Lower lobe of right lung (tissue), 2 donors: ENCODE measurements at regions of chr4 and their contacts with region 1.

Region 1: DNA sequence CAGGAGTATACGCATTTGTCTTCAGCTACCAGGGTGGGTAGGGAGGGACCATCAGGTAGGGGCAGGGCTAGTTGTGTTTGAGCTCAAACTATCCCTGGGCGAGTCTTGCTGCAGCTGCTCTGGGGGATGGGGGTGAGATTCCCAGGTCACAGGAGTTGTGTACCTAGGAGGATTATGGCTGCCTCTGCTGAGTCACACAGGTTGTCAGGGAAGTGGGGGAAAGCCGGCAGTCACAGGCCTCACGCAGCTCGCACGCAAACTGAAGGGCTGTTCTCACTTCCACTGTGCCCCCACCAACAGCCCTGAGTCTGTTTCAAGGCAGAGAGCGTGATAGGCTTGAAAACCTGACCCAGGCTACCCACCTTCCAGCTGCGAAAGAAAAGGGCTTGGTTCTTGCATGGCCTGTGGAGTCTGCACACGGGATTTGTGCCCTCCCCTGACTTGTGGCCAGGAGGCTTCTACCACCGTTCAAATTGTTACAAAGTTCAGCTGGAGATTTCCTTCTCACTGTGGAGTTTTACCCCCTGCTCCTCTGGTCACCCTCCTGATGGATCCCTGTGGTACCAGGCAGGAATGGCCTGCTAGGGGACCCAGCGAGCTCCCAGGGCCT is 63.8 kb downstream of the ARFIP1 start:
- DNase-seq: no peak
- ATAC-seq: no peak
- H3K4me3 ChIP-seq: no peak overlapping the region
- H3K27ac ChIP-seq: no peak overlapping the region
- H3K4me1 ChIP-seq: no peaks in the 10 kb centered on the region
- H3K27me3 ChIP-seq: no peaks in the 10 kb centered on the region
- CTCF ChIP-seq: no peak

Region 2: DNA sequence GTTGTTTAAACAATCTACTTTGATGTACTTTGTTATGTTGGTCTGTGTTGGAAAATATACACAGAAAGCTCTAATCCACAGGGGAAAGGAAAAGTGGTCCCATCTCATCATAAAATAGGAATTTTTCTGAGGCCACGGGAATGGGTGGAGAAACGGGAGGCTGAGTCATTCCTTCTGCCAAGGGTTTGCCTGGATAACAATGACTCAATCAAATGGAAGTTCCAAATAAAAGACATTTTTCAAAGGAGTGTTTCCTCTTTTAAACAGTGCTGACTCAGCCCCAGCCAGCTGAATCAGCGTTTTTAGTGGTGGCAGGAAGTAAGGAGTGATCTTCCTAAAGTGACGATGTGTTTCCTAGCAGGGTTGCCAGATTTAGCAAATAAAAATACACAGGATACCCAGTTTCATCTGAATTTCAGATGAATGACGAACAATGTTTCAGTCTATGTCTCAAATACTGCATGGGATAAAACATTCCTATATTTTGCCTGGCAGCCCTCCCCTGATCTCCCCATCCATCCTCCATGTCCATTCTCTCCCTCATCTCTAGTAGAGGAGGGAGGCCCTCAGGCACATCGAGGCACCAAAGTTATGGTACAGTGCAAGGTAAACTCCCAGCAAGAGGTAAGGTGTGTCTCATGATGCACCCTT is 737.3 kb before region 1 on chr4:
- intact Hi-C with region 1: no loop called
- DNase-seq: peak; percentile 57
- ATAC-seq: peak; percentile 64 to 68
- H3K4me3 ChIP-seq: no peak overlapping the region
- H3K27ac ChIP-seq: no peak overlapping the region
- H3K4me1 ChIP-seq: peaks cover 2% of the 10 kb centered on the region
- H3K27me3 ChIP-seq: no peaks in the 10 kb centered on the region
- CTCF ChIP-seq: no peak

Region 3: GRCh38 chr4:152927737-152928136 is 84.2 kb after region 1 on chr4:
- intact Hi-C with region 1: no loop called
- DNase-seq: no peak
- ATAC-seq: peak; percentile 45 to 48
- H3K4me3 ChIP-seq: no peak overlapping the region
- H3K27ac ChIP-seq: no peak overlapping the region
- H3K4me1 ChIP-seq: no peaks in the 10 kb centered on the region
- H3K27me3 ChIP-seq: no peaks in the 10 kb centered on the region
- CTCF ChIP-seq: no peak

Region 4: GRCh38 chr4:153083447-153083947 is 239.9 kb after region 1 on chr4:
- intact Hi-C with region 1: loop called (anchors 10 kb)
- DNase-seq: no peak
- ATAC-seq: peak; percentile 73 to 82
- H3K4me3 ChIP-seq: no peak overlapping the region
- H3K27ac ChIP-seq: no peak overlapping the region
- H3K4me1 ChIP-seq: peaks cover 22% of the 10 kb centered on the region
- H3K27me3 ChIP-seq: no peaks in the 10 kb centered on the region
- CTCF ChIP-seq: peak; percentile 63